ENCODE measurements at regions of chr2 and their contacts with region 1.

Region 1: GRCh38 chr2:231706731-231707624 is 1.3 kb upstream of the PTMA start:
- DNase-seq: peak; percentile 99
- H3K4me3 ChIP-seq: peak overlapping the region; percentile 69
- H3K27ac ChIP-seq: peak overlapping the region; percentile 99 to 100
- H3K4me1 ChIP-seq: peaks cover 4% of the 10 kb centered on the region
- H3K27me3 ChIP-seq: no peaks in the 10 kb centered on the region
- CTCF ChIP-seq: peak; percentile 92 to 98 (median 94)
- POLR2A ChIP-seq: peak; percentile 90

Region 2: GRCh38 chr2:231411831-231412617 is 295.0 kb before region 1 on chr2:
- intact Hi-C with region 1: no loop called
- DNase-seq: peak; percentile 77
- H3K4me3 ChIP-seq: peak overlapping the region; percentile 49 to 52
- H3K27ac ChIP-seq: peak overlapping the region; percentile 29 to 60
- H3K4me1 ChIP-seq: no peaks in the 10 kb centered on the region
- H3K27me3 ChIP-seq: no peaks in the 10 kb centered on the region
- CTCF ChIP-seq: peak; percentile 50 to 85 (median 78)
- POLR2A ChIP-seq: no peak

Region 3: GRCh38 chr2:231612179-231613053 is 94.6 kb before region 1 on chr2:
- intact Hi-C with region 1: loop called (anchors 2 kb)
- DNase-seq: peak; percentile 92
- H3K4me3 ChIP-seq: no peak overlapping the region
- H3K27ac ChIP-seq: peak overlapping the region; percentile 95
- H3K4me1 ChIP-seq: peaks cover 9% of the 10 kb centered on the region
- H3K27me3 ChIP-seq: no peaks in the 10 kb centered on the region
- CTCF ChIP-seq: peak; percentile 96 to 99 (median 98)
- POLR2A ChIP-seq: no peak

Region 4: GRCh38 chr2:231666171-231667095 is 40.5 kb before region 1 on chr2:
- intact Hi-C with region 1: loop called (anchors 2 kb)
- DNase-seq: peak; percentile 74
- H3K4me3 ChIP-seq: peak overlapping the region; percentile 27 to 28
- H3K27ac ChIP-seq: peak overlapping the region; percentile 90 to 95
- H3K4me1 ChIP-seq: no peaks in the 10 kb centered on the region
- H3K27me3 ChIP-seq: no peaks in the 10 kb centered on the region
- CTCF ChIP-seq: peak in 1 of 4 experiments; percentile 16
- POLR2A ChIP-seq: peak; percentile 84

Region 5: GRCh38 chr2:231674587-231675338 is 32.2 kb before region 1 on chr2:
- intact Hi-C with region 1: loop called (anchors 1 kb)
- DNase-seq: peak; percentile 39
- H3K4me3 ChIP-seq: no peak overlapping the region
- H3K27ac ChIP-seq: peak overlapping the region; percentile 67 to 73
- H3K4me1 ChIP-seq: no peaks in the 10 kb centered on the region
- H3K27me3 ChIP-seq: no peaks in the 10 kb centered on the region
- CTCF ChIP-seq: peak; percentile 59 to 93 (median 78)
- POLR2A ChIP-seq: no peak

Region 6: GRCh38 chr2:231680992-231681853 is 25.8 kb before region 1 on chr2:
- intact Hi-C with region 1: loop called (anchors 2 kb)
- DNase-seq: peak; percentile 70
- H3K4me3 ChIP-seq: peak overlapping the region; percentile 43 to 50
- H3K27ac ChIP-seq: peak overlapping the region; percentile 91 to 92
- H3K4me1 ChIP-seq: no peaks in the 10 kb centered on the region
- H3K27me3 ChIP-seq: no peaks in the 10 kb centered on the region
- CTCF ChIP-seq: peak in 2 of 4 experiments; percentile 3 to 6
- POLR2A ChIP-seq: peak; percentile 50

Measured in prostate gland (tissue), 2 donors.